A673 (cell line): ENCODE measurements at regions of chr14 and their contacts with region 1.

Region 1: GRCh38 chr14:65412032-65412846 is at the start of gene FUT8:
- DNase-seq: peak; percentile 96
- H3K4me3 ChIP-seq: peak within 1 kb of the TSS; percentile 68
- H3K27ac ChIP-seq: peak within 1 kb of the TSS; percentile 68
- H3K4me1 ChIP-seq: peaks cover 5% of the 10 kb centered on the region
- H3K27me3 ChIP-seq: no peaks in the 10 kb centered on the region
- CTCF ChIP-seq: peak; percentile 69
- total RNA-seq, gene FUT8: 11.0 and 11.6 TPM in 2 replicates

Region 2: GRCh38 chr14:65169351-65169750 is 242.9 kb before region 1 on chr14:
- CTCF ChIA-PET with region 1: interaction called, 8 read pairs
- POLR2A ChIA-PET with region 1: no interaction called
- intact Hi-C with region 1: loop called (anchors 5 kb)
- DNase-seq: no peak
- H3K4me3 ChIP-seq: no peak overlapping the region
- H3K27ac ChIP-seq: no peak overlapping the region
- H3K4me1 ChIP-seq: no peaks in the 10 kb centered on the region
- H3K27me3 ChIP-seq: peaks cover 7% of the 10 kb centered on the region
- CTCF ChIP-seq: no peak

Region 3: GRCh38 chr14:65791191-65791981 is 379.1 kb after region 1 on chr14:
- CTCF ChIA-PET with region 1: no interaction called
- POLR2A ChIA-PET with region 1: interaction called, 13 read pairs
- intact Hi-C with region 1: no loop called
- DNase-seq: peak; percentile 52
- H3K4me3 ChIP-seq: no peak overlapping the region
- H3K27ac ChIP-seq: no peak overlapping the region
- H3K4me1 ChIP-seq: peaks cover 8% of the 10 kb centered on the region
- H3K27me3 ChIP-seq: no peaks in the 10 kb centered on the region
- CTCF ChIP-seq: no peak

Region 4: GRCh38 chr14:65832431-65833266 is 420.4 kb after region 1 on chr14:
- CTCF ChIA-PET with region 1: interaction called, 10 read pairs
- POLR2A ChIA-PET with region 1: no interaction called
- intact Hi-C with region 1: no loop called
- DNase-seq: peak; percentile 18
- H3K4me3 ChIP-seq: no peak overlapping the region
- H3K27ac ChIP-seq: no peak overlapping the region
- H3K4me1 ChIP-seq: no peaks in the 10 kb centered on the region
- H3K27me3 ChIP-seq: peaks cover 11% of the 10 kb centered on the region
- CTCF ChIP-seq: peak; percentile 43; the same call in 1 of the 2 replicates

Region 5: DNA sequence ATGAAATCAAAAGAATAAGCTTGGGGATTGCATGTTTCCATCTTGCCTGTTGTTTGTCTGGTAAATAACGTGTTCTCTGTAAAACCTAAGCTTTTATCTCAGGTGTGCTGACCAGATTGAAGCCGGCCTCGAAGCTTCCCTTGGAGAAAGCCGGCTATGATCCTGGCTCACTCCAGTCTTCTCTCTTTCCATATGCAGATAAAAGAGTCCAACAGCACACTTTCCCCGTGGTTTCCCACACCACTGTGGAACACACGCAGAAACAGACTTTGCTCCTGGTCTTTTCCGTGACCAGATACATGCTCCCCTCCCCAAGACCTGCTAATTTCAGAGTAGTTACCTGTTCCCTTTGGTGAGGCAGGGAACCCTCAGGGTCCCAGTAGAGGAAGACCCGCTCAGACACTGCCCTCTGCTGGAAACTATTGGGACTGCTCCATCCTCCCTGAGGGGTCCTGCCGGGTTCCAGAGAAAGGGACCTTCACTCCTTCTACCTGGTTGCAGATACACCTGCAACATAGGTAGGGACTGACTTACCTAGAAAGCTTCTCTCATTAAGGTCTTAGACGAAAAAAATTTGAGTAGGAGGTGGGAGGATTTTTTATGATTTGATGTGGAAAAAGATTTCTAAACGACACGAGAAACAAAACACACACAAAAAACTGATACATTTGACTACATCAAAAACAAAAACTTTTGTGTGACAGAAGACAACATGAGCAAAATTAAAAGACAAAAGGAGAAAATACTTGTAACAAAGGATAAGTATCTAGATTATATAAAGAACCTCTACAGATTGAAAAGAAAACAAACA is 658.5 kb after region 1 on chr14:
- CTCF ChIA-PET with region 1: no interaction called
- POLR2A ChIA-PET with region 1: no interaction called
- intact Hi-C with region 1: loop called (anchors 2 kb)
- DNase-seq: peak; percentile 50
- H3K4me3 ChIP-seq: no peak overlapping the region
- H3K27ac ChIP-seq: no peak overlapping the region
- H3K4me1 ChIP-seq: no peaks in the 10 kb centered on the region
- H3K27me3 ChIP-seq: no peaks in the 10 kb centered on the region
- CTCF ChIP-seq: peak; percentile 90